ENCODE measurements at regions of chr19 and their contacts with region 1.

Region 1: GRCh38 chr19:58154679-58155648 is 4.4 kb upstream of the ZNF329 start:
- DNase-seq: peak; percentile 92 to 100 (median 98)
- ATAC-seq: peak; percentile 98
- H3K4me3 ChIP-seq: peak overlapping the region; percentile 97
- H3K4me3 Mint-ChIP-seq: peak overlapping the region; percentile 72 to 90 (median 84)
- H3K27ac ChIP-seq: peak overlapping the region; percentile 99
- H3K27ac Mint-ChIP-seq: peak overlapping the region; percentile 52 to 80 (median 73)
- H3K4me1 ChIP-seq: peaks cover 8 to 13% of the 10 kb centered on the region in 2 donors
- H3K4me1 Mint-ChIP-seq: peaks cover 6 to 33% (median 19%) of the 10 kb centered on the region in 7 donors
- H3K27me3 ChIP-seq: no peaks in the 10 kb centered on the region
- H3K27me3 Mint-ChIP-seq: no peaks in the 10 kb centered on the region

Region 2: DNA sequence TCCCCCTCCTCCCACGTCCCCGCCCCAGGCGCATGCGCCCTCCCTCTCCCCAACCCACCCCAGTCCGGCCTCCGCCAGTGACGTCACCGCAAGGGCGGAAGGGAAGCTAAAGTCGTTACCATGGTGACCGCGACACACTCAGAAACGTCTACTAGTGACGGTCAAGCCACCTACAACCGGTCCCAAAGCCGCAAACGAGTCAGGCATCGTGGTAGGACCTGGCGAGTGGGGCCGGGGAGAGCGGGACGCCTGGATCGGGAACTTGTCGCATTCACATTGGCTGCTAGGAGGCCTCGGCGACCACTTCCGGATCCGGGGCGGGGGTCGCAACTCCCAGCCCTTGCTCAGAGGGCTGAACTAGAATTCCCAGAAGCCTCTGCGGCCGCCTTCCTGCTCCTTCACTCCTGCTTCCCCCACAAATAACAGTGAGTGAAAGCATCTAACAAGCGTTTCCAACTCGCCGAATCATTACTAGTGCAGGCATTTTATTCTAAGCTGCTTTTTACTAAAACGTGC is 1840.3 kb before region 1 on chr19 and contains the start of gene ZSCAN5A:
- CTCF ChIA-PET with region 1: no interaction called
- POLR2A ChIA-PET with region 1: no interaction called
- intact Hi-C with region 1: loop called in 1 of 2 experiments (anchors 10 kb)
- DNase-seq: peak; percentile 93 to 99 (median 99)
- ATAC-seq: peak; percentile 85
- H3K4me3 ChIP-seq: peak within 1 kb of the TSS; percentile 86
- H3K4me3 Mint-ChIP-seq: peak within 1 kb of the TSS; percentile 79 to 100 (median 96)
- H3K27ac ChIP-seq: peak within 1 kb of the TSS; percentile 97
- H3K27ac Mint-ChIP-seq: peak within 1 kb of the TSS; percentile 95 to 100 (median 99)
- H3K4me1 ChIP-seq: peaks cover 4 to 10% of the 10 kb centered on the region in 2 donors
- H3K4me1 Mint-ChIP-seq: peaks cover 13 to 41% (median 26%) of the 10 kb centered on the region in 7 donors
- H3K27me3 ChIP-seq: no peaks in the 10 kb centered on the region
- H3K27me3 Mint-ChIP-seq: no peaks in the 10 kb centered on the region
- total RNA-seq, gene ZSCAN5A: 8.0 to 15.4 (median 11.8) TPM

Region 3: GRCh38 chr19:57240311-57241090 is 914.5 kb before region 1 on chr19 and contains the start of gene ZNF805:
- CTCF ChIA-PET with region 1: no interaction called
- POLR2A ChIA-PET with region 1: no interaction called
- intact Hi-C with region 1: loop called in 1 of 2 experiments (anchors 1 kb)
- DNase-seq: peak; percentile 82 to 96 (median 93)
- ATAC-seq: peak; percentile 97
- H3K4me3 ChIP-seq: peak within 1 kb of the TSS; percentile 73
- H3K4me3 Mint-ChIP-seq: peak within 1 kb of the TSS; percentile 88 to 97 (median 94)
- H3K27ac ChIP-seq: peak within 1 kb of the TSS; percentile 95
- H3K27ac Mint-ChIP-seq: peak within 1 kb of the TSS; percentile 96 to 99 (median 97)
- H3K4me1 ChIP-seq: peaks cover 19% of the 10 kb centered on the region in 2 donors
- H3K4me1 Mint-ChIP-seq: peaks cover 20 to 44% (median 36%) of the 10 kb centered on the region in 7 donors
- H3K27me3 ChIP-seq: no peaks in the 10 kb centered on the region
- H3K27me3 Mint-ChIP-seq: peaks cover 0 to 3% (median 0%) of the 10 kb centered on the region in 5 donors
- total RNA-seq, gene ZNF805: 12.0 to 26.2 (median 23.7) TPM

Region 4: GRCh38 chr19:57578487-57579205 is 576.3 kb before region 1 on chr19 and contains the start of gene ZNF416:
- CTCF ChIA-PET with region 1: no interaction called
- POLR2A ChIA-PET with region 1: interaction called, 4 read pairs
- intact Hi-C with region 1: loop called (anchors 2 to 10 kb)
- DNase-seq: peak; percentile 76 to 98 (median 96)
- ATAC-seq: peak; percentile 99
- H3K4me3 ChIP-seq: peak within 1 kb of the TSS; percentile 73
- H3K4me3 Mint-ChIP-seq: peak within 1 kb of the TSS; percentile 75 to 91 (median 85)
- H3K27ac ChIP-seq: peak within 1 kb of the TSS; percentile 80
- H3K27ac Mint-ChIP-seq: peak within 1 kb of the TSS; percentile 78 to 91 (median 87)
- H3K4me1 ChIP-seq: peaks cover 16 to 20% of the 10 kb centered on the region in 2 donors
- H3K4me1 Mint-ChIP-seq: peaks cover 13 to 35% (median 26%) of the 10 kb centered on the region in 7 donors
- H3K27me3 ChIP-seq: no peaks in the 10 kb centered on the region
- H3K27me3 Mint-ChIP-seq: no peaks in the 10 kb centered on the region
- total RNA-seq, gene ZNF416: 4.4 to 13.8 (median 5.7) TPM

Region 5: GRCh38 chr19:57819475-57820148 is 335.4 kb before region 1 on chr19:
- CTCF ChIA-PET with region 1: interaction called, 3 read pairs
- POLR2A ChIA-PET with region 1: interaction called, 7 read pairs
- intact Hi-C with region 1: loop called in 1 of 2 experiments (anchors 1 kb)
- DNase-seq: peak; percentile 45 to 85 (median 79)
- ATAC-seq: peak; percentile 89
- H3K4me3 ChIP-seq: peak overlapping the region; percentile 98
- H3K4me3 Mint-ChIP-seq: peak overlapping the region; percentile 95 to 99 (median 98)
- H3K27ac ChIP-seq: peak overlapping the region; percentile 92
- H3K27ac Mint-ChIP-seq: peak overlapping the region; percentile 88 to 99 (median 95)
- H3K4me1 ChIP-seq: peaks cover 0 to 13% of the 10 kb centered on the region in 2 donors
- H3K4me1 Mint-ChIP-seq: peaks cover 38 to 73% (median 67%) of the 10 kb centered on the region in 7 donors
- H3K27me3 ChIP-seq: no peaks in the 10 kb centered on the region
- H3K27me3 Mint-ChIP-seq: no peaks in the 10 kb centered on the region

Region 6: DNA sequence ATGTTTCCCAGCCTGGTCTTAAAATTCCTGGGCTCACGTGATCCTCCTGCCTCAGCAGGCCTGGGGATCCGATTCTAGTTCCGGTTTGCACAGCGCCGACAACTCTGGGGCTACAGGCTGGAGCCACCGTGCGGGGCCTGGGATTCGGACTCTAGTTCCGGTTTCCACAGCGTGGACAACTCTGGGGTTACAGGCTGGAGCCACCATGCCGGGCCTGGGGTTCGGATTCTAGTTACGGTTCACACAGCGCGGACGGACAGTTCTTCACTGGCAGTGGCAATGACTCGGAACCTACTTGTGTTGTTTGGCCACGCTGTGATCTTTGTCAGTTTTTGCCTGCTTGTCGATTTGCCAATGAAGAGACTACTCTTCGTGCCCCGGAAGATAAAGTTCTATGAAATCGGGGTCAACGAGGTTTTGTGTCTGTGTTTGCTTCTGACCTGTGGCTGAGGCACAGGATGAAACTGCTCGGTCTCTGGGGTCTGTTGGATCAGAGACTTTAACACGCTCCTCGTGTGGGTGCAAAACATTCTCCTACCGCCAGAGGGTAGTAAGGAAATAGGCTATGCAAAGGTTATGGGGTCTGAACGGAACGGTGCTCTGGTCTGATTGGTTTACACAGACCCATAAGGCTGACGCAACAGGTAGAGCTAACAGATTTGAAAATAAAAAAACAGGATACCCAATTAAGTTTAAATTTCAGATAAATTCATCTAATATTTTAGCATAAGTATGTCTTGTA is 133.3 kb before region 1 on chr19:
- CTCF ChIA-PET with region 1: no interaction called
- POLR2A ChIA-PET with region 1: no interaction called
- intact Hi-C with region 1: loop called in 1 of 2 experiments (anchors 1 kb)
- DNase-seq: peak in 5 of 9 donors; percentile 21 to 58 (median 27)
- ATAC-seq: peak; percentile 92
- H3K4me3 ChIP-seq: no peak overlapping the region
- H3K4me3 Mint-ChIP-seq: no peak overlapping the region
- H3K27ac ChIP-seq: no peak overlapping the region
- H3K27ac Mint-ChIP-seq: no peak overlapping the region
- H3K4me1 ChIP-seq: no peaks in the 10 kb centered on the region
- H3K4me1 Mint-ChIP-seq: no peaks in the 10 kb centered on the region
- H3K27me3 ChIP-seq: no peaks in the 10 kb centered on the region
- H3K27me3 Mint-ChIP-seq: peaks cover 0 to 4% (median 0%) of the 10 kb centered on the region in 5 donors

Measured in naive thymus-derived CD4-positive, alpha-beta T cell (primary cell).